HEK293 (cell line): ENCODE measurements at regions of chr15 and their contacts with region 1.

Region 1: GRCh38 chr15:81323944-81324881 is at the start of gene STARD5:
- H3K4me3 ChIP-seq: peak within 1 kb of the TSS; percentile 62
- H3K27ac ChIP-seq: no peak within 1 kb of the TSS
- H3K4me1 ChIP-seq: no peaks in the 10 kb centered on the region
- CTCF ChIP-seq: peak; percentile 26; the same call in 1 of the 2 replicates

Region 2: DNA sequence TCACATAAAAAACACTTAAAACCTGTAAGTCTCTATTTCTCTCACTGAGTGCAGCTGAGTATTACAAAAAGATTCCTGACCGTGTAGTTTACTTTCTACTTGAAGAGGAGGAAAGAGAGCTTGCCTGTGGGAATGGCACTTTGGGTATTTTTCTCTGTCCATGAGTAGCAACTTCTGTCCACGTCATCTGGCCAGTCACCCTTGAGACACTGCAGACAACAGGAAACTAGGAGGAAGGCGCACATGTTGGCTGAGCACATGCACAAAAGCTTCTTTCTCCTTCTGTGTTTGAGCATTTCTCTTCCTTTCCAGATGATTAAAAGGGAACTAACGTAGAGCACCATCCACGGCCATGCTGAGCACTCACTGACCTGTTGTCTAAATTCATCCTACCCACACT is 20.0 kb before region 1 on chr15:
- CTCF ChIA-PET with region 1: no interaction called
- POLR2A ChIA-PET with region 1: no interaction called
- H3K4me3 ChIP-seq: no peak overlapping the region
- H3K27ac ChIP-seq: no peak overlapping the region
- H3K4me1 ChIP-seq: no peaks in the 10 kb centered on the region
- CTCF ChIP-seq: no peak

Region 3: DNA sequence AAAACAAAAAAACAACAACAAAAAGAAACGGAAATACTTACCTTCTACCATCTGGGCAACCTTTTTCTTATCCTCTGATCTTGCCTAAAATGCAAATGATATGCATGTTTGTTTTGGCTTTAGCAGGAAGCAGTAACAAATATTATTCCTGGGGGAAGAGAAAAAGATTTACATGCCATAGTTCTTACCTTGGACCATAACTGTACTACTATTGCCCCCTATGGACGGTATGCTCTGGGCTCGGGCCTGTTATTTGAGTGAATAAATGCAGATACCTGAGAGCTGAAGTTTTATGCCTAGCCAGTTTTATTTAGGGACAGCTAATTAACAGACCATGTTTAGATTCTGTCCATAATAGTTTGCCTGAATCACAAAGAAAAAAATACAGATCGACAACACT is 12.4 kb after region 1 on chr15:
- CTCF ChIA-PET with region 1: interaction called, 10 read pairs
- POLR2A ChIA-PET with region 1: interaction called, 4 read pairs
- H3K4me3 ChIP-seq: no peak overlapping the region
- H3K27ac ChIP-seq: no peak overlapping the region
- H3K4me1 ChIP-seq: peaks cover 5% of the 10 kb centered on the region; the same call in 1 of the 2 replicates
- CTCF ChIP-seq: no peak

Region 4: GRCh38 chr15:81534124-81534523 is 209.9 kb after region 1 on chr15:
- CTCF ChIA-PET with region 1: no interaction called
- POLR2A ChIA-PET with region 1: no interaction called
- H3K4me3 ChIP-seq: no peak overlapping the region
- H3K27ac ChIP-seq: no peak overlapping the region
- H3K4me1 ChIP-seq: peaks cover 18% of the 10 kb centered on the region
- CTCF ChIP-seq: no peak